Activated naive CD4-positive, alpha-beta T cell treated with anti-CD3 and anti-CD28 coated beads for 36 hours (primary cell): ENCODE measurements at regions of chr18 and their contacts with region 1.

Region 1: DNA sequence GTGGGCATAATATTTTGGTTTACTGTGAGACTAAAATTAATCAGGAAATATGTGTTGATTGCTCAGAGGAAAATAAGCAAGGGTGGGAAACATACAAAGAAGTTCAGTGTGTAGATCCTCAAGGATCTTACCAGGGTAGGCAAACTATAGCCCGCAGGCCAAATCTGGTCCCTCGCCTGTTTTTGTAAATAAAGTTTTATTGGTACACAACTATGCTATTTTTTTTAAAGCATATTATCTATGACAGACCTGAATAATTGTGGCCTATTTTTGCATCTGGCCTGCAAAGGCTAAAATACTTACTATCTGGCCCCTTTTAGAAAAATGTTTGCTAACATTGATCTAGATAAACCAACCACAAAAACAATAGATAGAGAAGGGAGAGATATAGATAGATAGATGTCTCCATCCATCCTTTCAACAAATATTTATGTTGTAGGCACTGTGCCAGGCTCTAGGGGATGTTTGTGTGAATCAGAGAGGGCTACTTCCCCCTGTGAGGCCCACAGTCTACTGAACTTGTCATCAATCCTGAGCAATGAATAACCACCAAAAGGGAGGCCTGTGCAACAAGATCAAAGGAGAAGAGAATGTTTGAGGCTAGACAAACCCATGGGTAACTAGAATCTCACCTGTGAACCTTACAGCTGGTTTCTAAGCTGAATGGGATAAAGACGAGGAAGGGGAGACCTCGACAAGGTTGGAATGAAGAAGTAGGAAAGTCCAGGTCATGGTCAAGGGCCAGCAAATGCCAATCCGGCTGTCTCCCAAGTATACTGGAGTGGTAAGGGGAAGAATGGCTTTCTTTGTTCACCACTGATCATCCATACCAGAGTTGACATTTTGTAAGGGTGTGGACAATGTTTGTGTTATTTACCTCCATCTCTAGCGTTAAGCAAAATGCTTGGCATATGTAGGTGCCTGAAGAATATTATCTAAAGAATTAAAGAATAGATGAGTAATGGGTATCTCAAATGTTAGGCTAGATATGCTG is 23.6 kb downstream of the ALPK2 start:
- DNase-seq: peak; percentile 84
- H3K4me3 Mint-ChIP-seq: no peak overlapping the region
- H3K27ac Mint-ChIP-seq: no peak overlapping the region
- H3K4me1 Mint-ChIP-seq: peaks cover 60% of the 10 kb centered on the region
- H3K27me3 Mint-ChIP-seq: no peaks in the 10 kb centered on the region

Region 2: DNA sequence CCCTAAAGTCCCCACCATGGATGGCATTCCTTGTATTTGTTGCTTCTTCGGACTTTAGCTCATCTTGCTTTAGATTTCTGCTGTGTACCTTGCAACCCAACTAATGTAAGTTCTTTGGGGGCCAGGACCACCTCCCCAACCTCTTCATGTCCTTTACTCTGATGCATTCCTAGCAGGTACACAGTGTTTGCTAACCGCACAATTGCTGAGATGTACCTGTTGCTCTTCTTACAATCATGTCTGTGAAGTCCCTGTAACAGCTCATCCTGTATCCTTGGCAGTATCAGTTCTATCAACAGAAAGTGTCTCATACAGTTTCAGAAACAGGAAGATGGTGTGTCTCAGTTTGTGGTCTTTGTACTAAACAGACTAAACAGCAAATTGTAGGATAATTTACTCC is 1228.8 kb before region 1 on chr18:
- CTCF ChIA-PET with region 1: no interaction called
- intact Hi-C with region 1: no loop called
- DNase-seq: no peak
- H3K4me3 Mint-ChIP-seq: no peak overlapping the region
- H3K27ac Mint-ChIP-seq: no peak overlapping the region
- H3K4me1 Mint-ChIP-seq: no peaks in the 10 kb centered on the region
- H3K27me3 Mint-ChIP-seq: peaks cover 16% of the 10 kb centered on the region

Region 3: DNA sequence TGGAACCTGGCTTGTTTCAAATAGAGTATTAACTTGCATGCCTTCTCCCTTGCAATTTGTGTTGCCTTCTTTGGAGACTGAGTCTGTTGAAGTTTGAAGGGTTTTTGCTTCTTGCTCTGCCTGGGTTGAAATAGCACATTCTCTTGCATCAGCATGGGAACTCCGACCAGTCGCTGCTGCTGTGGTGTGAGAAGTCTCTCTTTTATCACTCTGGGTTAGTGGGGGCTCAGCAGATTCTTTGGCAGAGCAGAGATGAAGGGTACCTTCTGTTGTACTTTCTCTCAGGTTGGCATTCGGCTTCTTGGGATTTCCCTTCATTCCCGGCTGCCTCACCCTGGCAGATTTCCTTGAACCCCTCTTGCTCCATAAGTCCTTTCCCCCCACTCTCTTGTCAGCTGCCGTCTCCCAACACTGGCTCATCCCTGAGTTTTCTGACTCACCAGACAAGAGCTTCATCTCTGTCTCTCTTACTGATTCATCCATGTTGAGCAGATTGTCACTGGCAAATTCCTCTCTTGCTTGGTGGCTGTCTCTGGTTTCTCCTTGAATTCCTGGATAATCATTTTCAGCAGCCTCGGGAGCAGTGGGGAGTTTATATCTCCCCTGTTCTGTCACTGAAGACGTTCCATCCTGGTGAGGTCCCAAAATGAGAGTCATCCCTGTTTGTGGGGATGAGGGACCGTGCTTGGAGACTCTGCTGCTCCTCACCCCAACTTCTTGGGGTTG is 26.3 kb before region 1 on chr18:
- CTCF ChIA-PET with region 1: no interaction called
- intact Hi-C with region 1: loop called (anchors 2 kb)
- DNase-seq: peak; percentile 33
- H3K4me3 Mint-ChIP-seq: peak overlapping the region; percentile 55
- H3K27ac Mint-ChIP-seq: peak overlapping the region; percentile 14
- H3K4me1 Mint-ChIP-seq: peaks cover 24% of the 10 kb centered on the region
- H3K27me3 Mint-ChIP-seq: peaks cover 2% of the 10 kb centered on the region

Region 4: GRCh38 chr18:58624011-58624410 is 18.7 kb after region 1 on chr18:
- CTCF ChIA-PET with region 1: no interaction called
- intact Hi-C with region 1: loop called (anchors 2 kb)
- DNase-seq: no peak
- H3K4me3 Mint-ChIP-seq: no peak overlapping the region
- H3K27ac Mint-ChIP-seq: no peak overlapping the region
- H3K4me1 Mint-ChIP-seq: peaks cover 25% of the 10 kb centered on the region
- H3K27me3 Mint-ChIP-seq: no peaks in the 10 kb centered on the region